ENCODE measurements at regions of chr11 and their contacts with region 1.

Region 1: DNA sequence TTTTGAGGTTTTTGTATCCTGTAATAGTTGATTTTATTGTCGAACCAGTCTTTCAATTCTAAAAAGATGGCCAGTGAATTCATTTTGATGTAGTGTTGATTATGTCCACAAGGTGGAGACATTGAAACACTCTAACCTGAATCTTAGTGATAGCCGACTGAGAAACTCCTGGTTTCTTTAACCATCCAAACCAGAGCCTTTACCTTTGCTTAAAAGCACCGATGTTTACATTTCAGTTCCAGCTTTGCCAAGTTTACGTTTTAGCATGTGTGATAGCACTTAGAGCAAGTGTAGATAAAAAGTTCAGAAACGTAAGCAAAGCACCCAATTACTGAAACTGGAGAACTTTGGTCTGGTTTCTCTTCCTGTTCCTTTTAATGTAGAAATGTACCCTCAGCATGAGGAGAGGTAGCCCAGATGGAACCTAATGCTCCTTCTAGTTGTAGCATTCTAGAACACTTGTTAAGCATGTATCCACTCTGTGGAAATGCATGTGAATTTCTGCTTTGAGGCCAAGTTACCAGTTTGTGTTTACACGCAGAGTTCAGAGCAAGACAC is 208.6 kb downstream of the DBX1 start:
- DNase-seq: peak; percentile 46
- H3K4me3 ChIP-seq: no peak overlapping the region
- H3K27ac ChIP-seq: no peak overlapping the region
- H3K4me1 ChIP-seq: no peaks in the 10 kb centered on the region
- H3K27me3 ChIP-seq: no peaks in the 10 kb centered on the region
- CTCF ChIP-seq: peak; percentile 35 to 82 (median 79)
- POLR2A ChIP-seq: no peak

Region 2: GRCh38 chr11:19842505-19842904 is 109.1 kb before region 1 on chr11:
- intact Hi-C with region 1: no loop called
- DNase-seq: no peak
- H3K4me3 ChIP-seq: no peak overlapping the region
- H3K27ac ChIP-seq: no peak overlapping the region
- H3K4me1 ChIP-seq: no peaks in the 10 kb centered on the region
- H3K27me3 ChIP-seq: no peaks in the 10 kb centered on the region
- CTCF ChIP-seq: no peak
- POLR2A ChIP-seq: no peak

Region 3: DNA sequence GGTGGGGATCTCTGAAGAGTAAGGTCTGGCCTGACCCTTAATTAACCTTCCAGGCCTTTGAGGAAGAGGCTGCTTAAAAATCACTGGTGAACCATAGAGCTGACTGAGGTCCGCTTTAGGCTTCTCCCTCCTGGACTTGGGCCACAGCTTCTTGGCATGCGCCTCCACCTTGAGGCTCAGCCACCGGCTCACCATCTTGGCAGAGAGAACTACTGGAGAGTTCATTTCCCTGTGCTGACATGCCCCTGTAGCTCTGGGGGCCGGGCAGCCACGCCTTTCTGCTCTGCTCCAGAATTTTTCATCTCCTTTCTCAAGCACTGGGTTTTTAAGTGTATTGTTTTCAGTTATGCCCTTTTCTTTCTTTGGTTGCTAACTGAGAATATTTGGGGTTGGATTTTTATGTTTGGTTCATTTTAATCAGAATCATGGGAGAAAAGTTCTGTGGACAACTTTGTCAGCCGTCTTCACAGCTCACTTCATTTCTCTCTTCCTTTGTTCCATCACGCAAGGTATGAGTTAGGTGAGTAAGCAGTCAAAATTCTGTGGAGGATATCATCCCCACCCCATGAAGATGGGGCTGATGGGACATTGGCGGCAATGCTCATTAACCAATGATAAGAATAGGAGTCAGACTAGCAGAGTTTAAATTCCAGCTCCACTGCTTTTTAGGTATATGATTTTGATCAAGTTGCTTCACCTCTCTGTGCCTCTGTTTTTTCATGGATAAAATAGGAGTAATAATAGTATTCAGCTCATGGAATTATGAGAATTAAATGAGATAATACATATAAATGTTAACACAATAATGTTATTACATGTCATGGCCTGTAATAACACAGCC is 104.7 kb after region 1 on chr11:
- intact Hi-C with region 1: loop called (anchors 2 kb)
- DNase-seq: peak; percentile 81
- H3K4me3 ChIP-seq: no peak overlapping the region
- H3K27ac ChIP-seq: peak overlapping the region; percentile 24 to 67
- H3K4me1 ChIP-seq: no peaks in the 10 kb centered on the region
- H3K27me3 ChIP-seq: no peaks in the 10 kb centered on the region
- CTCF ChIP-seq: no peak
- POLR2A ChIP-seq: no peak

Region 4: DNA sequence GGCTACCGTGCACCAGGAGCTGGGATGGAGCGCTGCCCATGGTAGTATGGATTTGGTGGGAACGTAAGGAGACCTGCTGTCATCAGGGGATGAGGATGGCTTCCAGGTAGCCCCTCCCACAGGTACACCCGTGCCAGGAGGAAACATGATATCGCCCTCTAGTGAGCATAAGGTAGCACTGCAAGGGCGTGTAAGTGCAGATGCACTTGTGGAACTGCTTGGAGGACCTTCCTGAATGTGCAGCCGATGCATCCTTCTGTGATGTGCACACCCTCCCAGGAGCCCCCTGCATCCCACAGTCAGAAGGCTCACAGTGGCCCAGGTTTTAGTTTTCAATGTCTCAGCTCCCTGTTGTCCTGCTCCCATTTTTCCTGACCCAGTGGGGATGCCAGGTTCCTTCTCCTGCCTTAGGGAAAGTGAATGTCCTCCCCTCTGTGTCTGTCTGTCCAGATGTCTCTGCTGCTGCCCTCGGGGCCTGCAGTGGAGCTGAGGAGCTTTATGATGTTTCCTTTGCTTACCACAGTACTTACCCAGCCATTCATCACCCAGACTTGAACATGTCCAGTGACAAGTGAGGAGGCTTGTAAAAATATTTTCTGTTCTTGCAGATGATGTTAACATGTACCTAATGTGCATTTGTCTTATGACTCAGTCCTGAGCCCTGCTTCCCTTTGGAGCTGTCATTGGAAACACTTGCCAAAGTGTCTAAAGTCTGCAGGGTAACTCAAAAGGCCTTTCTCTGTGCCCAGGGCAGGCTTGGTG is 159.5 kb after region 1 on chr11:
- intact Hi-C with region 1: loop called (anchors 5 kb)
- DNase-seq: peak; percentile 35
- H3K4me3 ChIP-seq: no peak overlapping the region
- H3K27ac ChIP-seq: no peak overlapping the region
- H3K4me1 ChIP-seq: peaks cover 3% of the 10 kb centered on the region
- H3K27me3 ChIP-seq: no peaks in the 10 kb centered on the region
- CTCF ChIP-seq: peak; percentile 38 to 80 (median 70)
- POLR2A ChIP-seq: no peak

Region 5: GRCh38 chr11:20127671-20128527 is 176.3 kb after region 1 on chr11:
- intact Hi-C with region 1: loop called (anchors 1 kb)
- DNase-seq: peak; percentile 57
- H3K4me3 ChIP-seq: no peak overlapping the region
- H3K27ac ChIP-seq: no peak overlapping the region
- H3K4me1 ChIP-seq: no peaks in the 10 kb centered on the region
- H3K27me3 ChIP-seq: no peaks in the 10 kb centered on the region
- CTCF ChIP-seq: peak; percentile 64 to 81 (median 75)
- POLR2A ChIP-seq: no peak

Region 6: GRCh38 chr11:20355221-20356219 is 403.9 kb after region 1 on chr11:
- intact Hi-C with region 1: loop called (anchors 5 kb)
- DNase-seq: no peak
- H3K4me3 ChIP-seq: no peak overlapping the region
- H3K27ac ChIP-seq: no peak overlapping the region
- H3K4me1 ChIP-seq: no peaks in the 10 kb centered on the region
- H3K27me3 ChIP-seq: no peaks in the 10 kb centered on the region
- CTCF ChIP-seq: peak in 2 of 4 experiments; percentile 29 to 39
- POLR2A ChIP-seq: no peak